ENCODE measurements at regions of chr15 and their contacts with region 1.

Region 1: GRCh38 chr15:33215941-33216872 is 21.7 kb upstream of the FMN1 start:
- DNase-seq: no peak
- H3K4me3 Mint-ChIP-seq: no peak overlapping the region
- H3K27ac Mint-ChIP-seq: no peak overlapping the region
- H3K4me1 Mint-ChIP-seq: no peaks in the 10 kb centered on the region
- H3K27me3 Mint-ChIP-seq: peaks cover 3% of the 10 kb centered on the region

Region 2: DNA sequence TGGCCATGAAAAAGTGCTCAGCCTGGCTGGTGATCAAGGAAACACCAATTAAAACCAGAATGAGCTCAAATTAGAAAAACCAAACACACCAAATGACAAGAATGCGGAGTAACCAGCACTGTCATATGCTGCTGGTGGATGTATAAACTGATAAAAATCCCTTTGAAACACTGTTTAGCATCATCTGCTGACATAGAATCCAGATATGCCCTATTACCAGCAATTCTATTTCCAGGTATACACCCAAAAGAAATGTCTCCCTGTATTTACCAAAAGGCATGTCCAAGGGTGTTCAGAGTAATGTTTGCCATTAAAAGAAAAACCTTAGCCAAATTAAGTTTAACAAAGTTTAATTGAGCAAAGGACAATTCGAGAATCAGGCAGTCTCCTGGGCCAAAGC is 160.2 kb before region 1 on chr15:
- intact Hi-C with region 1: no loop called
- DNase-seq: no peak
- H3K4me3 Mint-ChIP-seq: no peak overlapping the region
- H3K27ac Mint-ChIP-seq: no peak overlapping the region
- H3K4me1 Mint-ChIP-seq: no peaks in the 10 kb centered on the region
- H3K27me3 Mint-ChIP-seq: peaks cover 5% of the 10 kb centered on the region

Region 3: DNA sequence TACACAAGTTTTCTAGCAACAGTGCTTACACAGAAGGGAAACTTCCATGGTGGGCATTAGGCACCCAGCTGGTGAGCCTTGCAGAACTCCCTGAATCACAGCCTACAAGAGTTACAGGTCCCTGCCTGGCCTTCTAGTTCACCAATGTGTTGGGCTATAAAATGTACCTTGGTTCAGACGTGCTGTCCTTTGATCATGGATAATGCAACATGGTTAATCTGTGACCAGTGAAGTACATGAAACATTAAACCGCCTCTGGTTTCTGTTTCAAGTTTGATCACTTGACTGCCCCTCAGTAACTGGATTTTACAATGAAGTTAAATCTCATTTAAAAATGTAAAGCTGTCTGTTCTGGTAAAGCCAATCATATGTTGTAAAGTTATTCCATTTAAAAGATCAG is 73.5 kb before region 1 on chr15:
- intact Hi-C with region 1: loop called (anchors 10 kb)
- DNase-seq: no peak
- H3K4me3 Mint-ChIP-seq: no peak overlapping the region
- H3K27ac Mint-ChIP-seq: no peak overlapping the region
- H3K4me1 Mint-ChIP-seq: no peaks in the 10 kb centered on the region
- H3K27me3 Mint-ChIP-seq: peaks cover 9% of the 10 kb centered on the region

Region 4: DNA sequence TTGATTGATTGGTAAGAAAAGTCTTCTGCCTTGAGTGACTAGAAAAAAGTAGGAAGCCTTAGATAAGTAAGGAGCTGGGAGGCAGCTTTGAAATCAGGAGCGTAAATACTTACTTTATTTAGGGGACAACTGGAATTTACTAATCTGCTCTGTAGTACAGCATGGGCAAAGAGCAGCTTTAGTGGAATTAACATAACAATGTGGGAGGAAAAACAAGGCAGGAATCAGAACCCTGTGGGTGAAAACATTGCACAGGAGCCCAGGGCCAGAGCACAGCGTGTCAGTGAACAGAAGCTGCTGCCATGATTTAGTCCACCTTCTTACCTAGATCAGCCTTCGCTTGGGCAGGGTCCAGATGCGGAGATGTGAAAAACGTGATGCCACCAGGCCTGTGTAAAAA is 36.3 kb before region 1 on chr15:
- intact Hi-C with region 1: loop called (anchors 5 kb)
- DNase-seq: no peak
- H3K4me3 Mint-ChIP-seq: no peak overlapping the region
- H3K27ac Mint-ChIP-seq: no peak overlapping the region
- H3K4me1 Mint-ChIP-seq: no peaks in the 10 kb centered on the region
- H3K27me3 Mint-ChIP-seq: peaks cover 6% of the 10 kb centered on the region

Region 5: GRCh38 chr15:33194704-33195670 is 21.2 kb before region 1 on chr15 and contains the start of gene FMN1:
- intact Hi-C with region 1: no loop called
- DNase-seq: peak; percentile 97
- H3K4me3 Mint-ChIP-seq: peak within 1 kb of the TSS; percentile 80
- H3K27ac Mint-ChIP-seq: peak within 1 kb of the TSS; percentile 60
- H3K4me1 Mint-ChIP-seq: peaks cover 20% of the 10 kb centered on the region
- H3K27me3 Mint-ChIP-seq: peaks cover 46% of the 10 kb centered on the region
- total RNA-seq, gene FMN1: 0.02 TPM in 1 of 2 replicates, not detected in the other

Region 6: DNA sequence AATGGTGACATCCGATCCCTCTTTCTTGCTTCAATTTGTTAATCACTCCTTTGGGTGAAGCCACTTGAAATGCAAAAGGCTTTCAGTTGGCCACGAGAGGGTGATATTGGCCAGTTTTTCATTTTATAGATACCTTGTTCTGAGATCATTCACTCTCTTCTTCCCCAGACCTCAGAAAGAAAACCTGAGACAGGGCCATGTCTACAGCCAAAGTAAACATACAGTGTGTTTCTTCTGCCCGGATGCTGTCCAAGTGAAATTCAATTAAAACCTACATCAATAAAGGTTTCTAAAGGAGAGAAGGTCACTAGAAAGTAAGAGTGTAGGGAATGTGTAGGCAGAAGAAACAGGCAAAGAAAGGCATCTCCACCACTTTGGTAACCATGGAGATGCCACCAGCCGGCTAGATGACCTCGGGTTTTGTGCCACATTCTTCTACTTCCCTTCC is 17.8 kb after region 1 on chr15:
- intact Hi-C with region 1: no loop called
- DNase-seq: no peak
- H3K4me3 Mint-ChIP-seq: no peak overlapping the region
- H3K27ac Mint-ChIP-seq: no peak overlapping the region
- H3K4me1 Mint-ChIP-seq: no peaks in the 10 kb centered on the region
- H3K27me3 Mint-ChIP-seq: peaks cover 12% of the 10 kb centered on the region